ENCODE measurements at regions of chr11 and their contacts with region 1.

Region 1: GRCh38 chr11:66677599-66678375 is at the start of gene RBM4B:
- DNase-seq: peak; percentile 99
- ATAC-seq: peak; percentile 99
- total RNA-seq, gene RBM4B: 14.0 TPM

Region 2: GRCh38 chr11:66408488-66409214 is 269.1 kb before region 1 on chr11:
- intact Hi-C with region 1: loop called (anchors 1 kb)
- DNase-seq: peak; percentile 94
- ATAC-seq: peak; percentile 92

Region 3: GRCh38 chr11:66459138-66459778 is 218.5 kb before region 1 on chr11:
- intact Hi-C with region 1: no loop called
- DNase-seq: no peak
- ATAC-seq: no peak

Region 4: DNA sequence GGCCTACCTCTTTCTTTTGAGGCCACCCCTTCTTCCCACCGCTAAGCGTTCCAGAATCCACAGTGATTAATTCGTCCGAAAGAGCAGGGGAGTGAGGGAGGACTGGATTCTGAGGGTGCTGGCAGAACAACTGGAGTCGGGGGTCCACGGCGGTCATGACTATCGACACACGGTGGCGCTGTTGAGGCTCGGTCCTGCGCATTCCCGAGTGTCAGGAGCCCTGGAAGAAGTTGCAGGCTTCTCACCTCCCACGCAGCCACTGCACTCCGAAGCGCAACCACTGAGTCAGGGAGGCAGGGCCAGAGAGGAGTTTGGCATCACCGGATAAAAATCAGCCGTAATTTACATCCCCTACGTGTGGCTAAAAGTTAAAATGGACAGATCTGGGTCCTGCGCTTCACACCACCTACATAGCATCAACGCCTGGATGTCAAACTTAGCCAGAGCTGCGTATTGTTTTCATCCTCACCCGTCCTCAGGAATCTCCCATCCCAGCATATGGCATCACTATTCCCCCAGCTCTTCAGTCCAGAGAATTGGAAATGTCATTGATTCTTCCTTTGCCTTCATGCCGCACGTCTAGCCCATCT is 98.7 kb before region 1 on chr11:
- intact Hi-C with region 1: loop called (anchors 1 kb)
- DNase-seq: peak; percentile 85
- ATAC-seq: peak; percentile 91

Region 5: DNA sequence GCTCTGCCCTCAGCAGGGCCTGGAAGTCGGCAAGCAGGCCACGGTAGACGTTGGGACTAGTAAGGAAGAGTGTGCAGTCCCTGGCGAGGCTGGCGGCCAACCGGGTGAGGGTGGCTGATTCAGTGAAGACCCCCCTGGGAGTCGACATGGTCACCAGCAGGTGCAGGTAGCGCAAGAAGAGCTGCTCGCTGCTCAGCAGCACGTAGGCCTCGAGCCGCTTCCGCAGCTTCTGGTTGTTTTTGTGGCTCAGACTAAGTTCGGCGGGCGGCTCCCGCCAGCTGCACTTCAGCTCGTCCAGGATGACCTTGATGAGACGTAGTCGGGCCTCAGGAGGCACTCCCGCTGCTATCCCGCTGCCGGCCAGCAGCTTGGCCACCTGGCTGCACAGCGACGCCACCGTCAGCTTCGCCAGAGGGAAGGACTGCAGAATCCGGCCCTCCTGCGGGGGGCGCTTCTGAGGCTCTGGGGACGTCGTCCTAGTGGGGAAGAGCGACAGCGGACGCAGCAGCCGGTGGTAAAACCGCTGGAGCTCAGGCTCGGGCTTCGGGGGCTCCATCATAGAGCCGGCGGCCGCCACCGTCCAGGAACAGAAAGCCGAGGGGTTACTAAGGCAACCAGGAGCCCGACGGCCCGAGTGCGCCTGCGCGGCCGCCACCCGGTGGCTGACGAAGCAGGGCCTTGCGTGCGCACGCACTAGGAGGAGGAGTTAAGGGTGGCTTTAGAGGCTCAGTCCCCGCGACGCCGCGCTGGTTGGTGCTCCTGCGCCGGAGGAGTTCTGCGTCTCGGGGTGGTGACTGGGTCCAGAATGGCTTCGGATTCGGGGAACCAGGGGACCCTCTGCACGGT is 85.1 kb before region 1 on chr11 and contains the starts of genes CCDC87 and CCS:
- intact Hi-C with region 1: loop called (anchors 5 kb)
- DNase-seq: peak; percentile 100
- ATAC-seq: peak; percentile 95
- total RNA-seq, gene CCDC87: 0.27 TPM
- total RNA-seq, gene CCS: 23.5 TPM

Region 6: GRCh38 chr11:66616379-66617154 is 61.2 kb before region 1 on chr11 and contains the start of gene RBM14:
- intact Hi-C with region 1: loop called (anchors 2 kb)
- DNase-seq: peak; percentile 99
- ATAC-seq: peak; percentile 97
- total RNA-seq, gene RBM14: 30.1 TPM

Region 7: DNA sequence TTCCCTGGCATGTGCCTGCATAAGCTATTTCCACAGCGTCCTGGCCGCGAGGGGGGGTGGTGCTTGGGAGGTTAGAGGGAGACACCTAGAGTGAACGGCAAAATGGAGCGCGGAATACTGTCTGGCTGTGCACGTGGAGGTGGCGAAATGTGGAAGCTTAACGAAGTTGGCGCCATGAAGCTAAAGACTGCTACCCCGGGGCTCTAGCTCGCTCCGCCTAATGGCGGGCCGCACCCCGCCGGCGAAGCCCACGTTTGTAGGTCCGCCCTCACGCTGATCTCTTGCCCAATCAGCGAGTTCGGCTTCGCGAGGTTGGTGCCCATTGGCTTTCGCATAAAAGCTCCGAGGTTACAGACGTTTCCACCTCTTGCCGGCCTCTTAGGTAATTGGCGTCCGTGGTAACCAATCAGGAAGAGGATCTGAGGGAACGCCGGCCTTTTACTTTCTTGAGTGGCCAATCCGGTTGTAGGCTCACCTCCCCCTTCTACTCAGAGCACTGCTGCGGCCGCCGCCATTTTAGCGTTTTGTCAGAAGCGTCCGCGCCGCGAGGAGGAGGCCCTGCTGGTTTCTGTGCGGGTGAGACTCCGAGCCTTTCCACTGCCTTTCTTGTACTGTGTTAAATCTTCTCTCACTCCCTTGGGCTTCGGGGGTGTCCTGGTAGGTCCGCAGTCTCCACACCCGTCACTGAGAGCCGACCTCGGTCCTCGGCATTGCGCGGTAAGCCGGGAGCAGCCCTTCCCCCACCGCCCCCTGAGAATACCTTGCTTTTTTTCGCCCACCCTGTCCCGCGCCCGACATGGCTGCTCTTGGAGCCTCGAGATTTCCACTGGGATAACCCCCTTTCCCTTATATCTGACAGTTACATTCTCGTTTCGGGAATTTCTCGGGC is 39.4 kb before region 1 on chr11 and contains the start of gene RBM4:
- intact Hi-C with region 1: loop called (anchors 2 kb)
- DNase-seq: peak; percentile 96
- ATAC-seq: peak; percentile 96
- total RNA-seq, gene RBM4: 72.1 TPM

Region 8: GRCh38 chr11:66651016-66651415 is 26.8 kb before region 1 on chr11:
- intact Hi-C with region 1: no loop called
- DNase-seq: no peak
- ATAC-seq: no peak

Region 9: GRCh38 chr11:66855574-66856495 is 178.0 kb after region 1 on chr11:
- intact Hi-C with region 1: no loop called
- DNase-seq: peak; percentile 97
- ATAC-seq: peak; percentile 96

Measured in Right ventricle myocardium inferior (tissue), 1 donor.